ENCODE measurements at regions of chr16 and their contacts with region 1.

Region 1: GRCh38 chr16:67822511-67822910 is 15.8 kb downstream of the TSNAXIP1 start:
- DNase-seq: no peak

Region 2: DNA sequence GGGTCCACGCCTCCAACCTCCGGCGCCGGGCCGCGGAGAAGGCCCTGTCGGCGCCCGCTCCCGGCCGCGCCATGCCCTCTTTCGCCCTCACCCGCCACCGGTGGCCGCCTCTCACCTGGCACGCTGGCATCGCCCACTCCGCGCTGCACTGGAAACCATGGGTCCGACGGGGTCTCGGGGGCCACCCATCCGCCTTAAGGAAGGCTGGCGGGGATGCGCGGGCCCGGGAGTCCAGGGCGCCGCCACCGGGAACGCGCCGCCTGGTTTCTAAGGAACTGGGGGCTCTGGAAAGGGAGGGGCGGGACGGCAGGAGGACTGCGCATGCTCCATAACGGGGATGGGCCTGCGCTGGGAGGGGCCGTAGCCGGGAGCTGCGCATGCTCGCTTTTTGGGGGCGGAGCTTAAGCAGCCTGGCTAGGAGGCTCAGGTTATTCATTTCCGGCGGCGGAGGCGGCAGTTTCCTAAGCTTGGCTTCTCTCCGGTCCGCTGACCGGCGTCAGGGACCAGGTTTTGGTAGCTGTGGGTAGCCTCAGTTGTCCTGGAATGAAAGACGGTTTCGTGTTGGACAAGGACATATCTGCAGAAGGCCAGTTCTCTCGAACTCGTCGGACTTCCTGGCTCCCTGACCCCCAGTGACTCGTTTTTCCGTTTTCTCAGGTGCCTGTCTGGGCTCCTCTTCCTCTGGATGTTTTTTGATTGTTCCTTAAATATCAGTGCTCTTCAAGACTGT is 103.3 kb before region 1 on chr16 and contains the start of gene GFOD2:
- in situ Hi-C with region 1: loop called (anchors 5 kb)
- DNase-seq: peak; percentile 97
- total RNA-seq, gene GFOD2: 26.2 TPM in 2 replicates

Region 3: GRCh38 chr16:67879936-67880335 is 57.4 kb after region 1 on chr16:
- in situ Hi-C with region 1: loop called (anchors 5 kb)
- DNase-seq: no peak

Region 4: GRCh38 chr16:67919622-67920221 is 97.2 kb after region 1 on chr16:
- in situ Hi-C with region 1: loop called (anchors 5 kb)
- DNase-seq: no peak